ENCODE measurements at regions of chr5 and their contacts with region 1.

Region 1: GRCh38 chr5:17326600-17327037 is 109.2 kb downstream of the BASP1 start:
- DNase-seq: peak in 1 of 3 donors; percentile 71
- ATAC-seq: peak; percentile 98
- H3K4me3 ChIP-seq: no peak overlapping the region
- H3K4me1 ChIP-seq: peaks cover 9% of the 10 kb centered on the region
- CTCF ChIP-seq: no peak

Region 2: DNA sequence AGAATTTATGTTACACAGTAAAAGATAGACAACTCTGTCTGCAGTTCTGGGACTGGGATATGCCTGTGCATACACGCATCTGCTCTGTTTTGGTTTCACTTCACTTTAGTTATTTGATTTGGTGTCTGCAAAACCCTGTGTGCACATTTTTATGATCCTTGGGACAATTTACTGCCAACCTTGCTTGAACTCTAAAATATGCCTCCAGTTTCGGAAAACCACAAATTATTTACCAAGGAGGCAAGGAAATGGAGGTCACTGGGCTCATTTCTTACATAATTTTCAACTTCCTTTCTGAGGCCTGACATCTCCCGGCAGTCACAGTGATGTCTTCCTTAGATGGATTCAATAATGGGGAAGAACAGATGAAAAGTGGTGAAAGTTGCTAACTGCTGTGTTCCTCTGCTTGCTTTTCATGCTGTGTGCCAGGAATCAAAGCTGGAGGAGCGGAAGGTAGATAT is 110.2 kb after region 1 on chr5:
- intact Hi-C with region 1: loop called in 1 of 2 experiments (anchors 10 kb)
- DNase-seq: no peak
- ATAC-seq: peak; percentile 91
- H3K4me3 ChIP-seq: no peak overlapping the region
- H3K4me1 ChIP-seq: peaks cover 7% of the 10 kb centered on the region
- CTCF ChIP-seq: no peak